Naive thymus-derived CD4-positive, alpha-beta T cell (primary cell): ENCODE measurements at regions of chr16 and their contacts with region 1.

Region 1: DNA sequence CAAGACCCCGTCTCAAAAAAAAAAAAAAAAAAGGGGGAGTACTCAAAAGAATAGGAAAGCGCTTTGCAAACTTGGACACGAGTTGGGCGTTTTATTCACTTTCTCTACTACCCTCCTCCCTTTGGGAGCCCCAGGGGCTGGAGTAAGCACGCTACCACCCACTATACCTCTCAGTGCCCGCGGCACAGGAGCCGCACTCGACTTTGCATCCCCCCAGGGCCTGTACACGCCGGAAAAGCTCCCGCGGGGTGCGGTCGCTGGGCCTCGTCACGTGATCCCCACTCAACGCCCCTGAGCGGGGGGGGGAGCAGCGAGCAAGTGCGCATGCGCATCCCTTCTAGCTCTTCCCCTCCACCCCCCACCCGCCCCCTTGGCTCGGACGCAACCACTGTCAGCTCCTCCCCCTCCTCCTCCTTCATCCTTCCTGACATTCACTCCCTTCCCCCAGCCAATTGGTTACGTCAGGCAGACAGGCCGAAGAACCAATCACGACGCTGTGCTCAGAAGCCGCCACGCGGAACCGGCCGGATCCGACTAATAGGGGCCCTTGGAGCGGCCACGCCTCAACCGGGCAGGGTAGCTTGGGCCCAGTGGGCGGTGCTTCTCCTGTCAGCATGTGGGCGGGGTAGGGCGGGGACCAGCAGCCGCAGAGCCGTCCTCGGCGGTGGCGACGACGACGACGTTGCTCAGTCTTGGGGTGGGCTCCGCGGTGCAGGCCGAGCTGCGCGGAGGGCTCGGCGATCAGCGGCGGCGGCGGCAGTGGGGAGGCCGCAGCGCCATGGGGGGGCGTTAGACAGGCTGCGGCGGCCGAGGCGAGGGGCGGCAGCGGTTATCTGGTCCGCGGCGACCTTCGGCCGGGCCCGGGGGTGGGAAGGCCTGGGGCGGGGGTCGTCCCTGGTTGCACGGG is at the start of gene HAPSTR1:
- DNase-seq: peak; percentile 89 to 100 (median 99)
- ATAC-seq: peak; percentile 93
- H3K4me3 ChIP-seq: peak within 1 kb of the TSS; percentile 90
- H3K4me3 Mint-ChIP-seq: peak within 1 kb of the TSS; percentile 90 to 100 (median 98)
- H3K27ac ChIP-seq: peak within 1 kb of the TSS; percentile 98
- H3K27ac Mint-ChIP-seq: peak within 1 kb of the TSS; percentile 92 to 99 (median 97)
- H3K4me1 ChIP-seq: peaks cover 21 to 32% of the 10 kb centered on the region in 2 donors
- H3K4me1 Mint-ChIP-seq: peaks cover 29 to 40% (median 39%) of the 10 kb centered on the region in 7 donors
- H3K27me3 ChIP-seq: no peaks in the 10 kb centered on the region
- H3K27me3 Mint-ChIP-seq: peaks cover 0 to 4% (median 0%) of the 10 kb centered on the region in 5 donors
- total RNA-seq, gene HAPSTR1: 69.6 to 136 (median 87.3) TPM

Region 2: GRCh38 chr16:8621572-8622314 is 469.5 kb before region 1 on chr16 and contains the start of gene METTL22:
- CTCF ChIA-PET with region 1: no interaction called
- POLR2A ChIA-PET with region 1: interaction called, 9 read pairs
- intact Hi-C with region 1: loop called (anchors 1 to 5 kb)
- DNase-seq: peak; percentile 83 to 98 (median 90)
- ATAC-seq: peak; percentile 99
- H3K4me3 ChIP-seq: peak within 1 kb of the TSS; percentile 97
- H3K4me3 Mint-ChIP-seq: peak within 1 kb of the TSS; percentile 93 to 100 (median 95)
- H3K27ac ChIP-seq: peak within 1 kb of the TSS; percentile 92
- H3K27ac Mint-ChIP-seq: peak within 1 kb of the TSS; percentile 75 to 93 (median 87)
- H3K4me1 ChIP-seq: peaks cover 7 to 10% of the 10 kb centered on the region in 2 donors
- H3K4me1 Mint-ChIP-seq: peaks cover 17 to 40% (median 26%) of the 10 kb centered on the region in 7 donors
- H3K27me3 ChIP-seq: no peaks in the 10 kb centered on the region
- H3K27me3 Mint-ChIP-seq: peaks cover 0 to 17% (median 6%) of the 10 kb centered on the region in 5 donors
- total RNA-seq, gene METTL22: 28.9 to 59.4 (median 48.9) TPM

Region 3: DNA sequence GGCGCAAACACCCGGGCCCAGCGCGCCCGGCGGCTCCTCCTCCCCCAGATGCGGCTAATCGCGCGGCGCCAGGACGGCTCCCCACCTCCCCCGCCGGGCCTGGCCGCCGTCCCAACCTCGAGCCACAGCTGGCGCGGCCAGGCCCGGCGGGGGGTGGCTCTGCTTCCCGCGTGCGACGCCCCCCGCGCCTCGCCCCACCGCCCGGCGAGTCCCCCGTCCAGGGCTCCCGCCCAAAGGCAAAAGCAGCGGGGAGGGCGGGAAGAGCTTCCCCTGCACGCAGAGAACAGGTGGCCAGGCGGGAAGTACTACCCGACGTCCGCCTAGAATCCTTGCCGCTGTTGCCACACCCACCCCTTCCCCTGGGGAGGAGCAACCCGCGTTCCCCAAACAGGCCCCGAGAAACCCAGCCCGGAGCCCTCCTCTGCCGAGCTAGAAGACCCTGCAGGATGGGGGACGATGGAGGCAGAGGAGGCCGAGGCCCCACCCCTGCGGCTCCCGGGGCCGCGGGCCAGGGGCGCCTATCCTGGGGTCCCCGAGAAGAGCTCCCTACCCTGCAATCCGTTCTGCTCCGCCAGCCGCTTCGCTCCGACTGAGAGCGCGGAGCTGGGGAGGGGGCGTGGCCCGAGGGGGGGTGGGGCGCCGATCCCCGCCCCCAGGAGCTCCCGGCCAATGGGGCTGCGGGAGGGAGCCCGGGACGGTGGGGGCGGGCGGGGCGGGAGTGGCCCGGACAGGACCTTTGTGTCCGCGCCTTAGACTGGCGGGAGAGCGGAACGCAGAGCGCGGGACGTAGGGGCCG is 222.6 kb before region 1 on chr16 and contains the start of gene CARHSP1:
- CTCF ChIA-PET with region 1: no interaction called
- POLR2A ChIA-PET with region 1: interaction called, 25 read pairs
- intact Hi-C with region 1: loop called (anchors 1 kb)
- DNase-seq: peak; percentile 65 to 87 (median 74)
- ATAC-seq: peak; percentile 91
- H3K4me3 ChIP-seq: peak within 1 kb of the TSS; percentile 74
- H3K4me3 Mint-ChIP-seq: peak within 1 kb of the TSS; percentile 93 to 98 (median 96)
- H3K27ac ChIP-seq: peak within 1 kb of the TSS; percentile 67
- H3K27ac Mint-ChIP-seq: peak within 1 kb of the TSS; percentile 88 to 98 (median 95)
- H3K4me1 ChIP-seq: peaks cover 6 to 12% of the 10 kb centered on the region in 2 donors
- H3K4me1 Mint-ChIP-seq: peaks cover 30 to 63% (median 51%) of the 10 kb centered on the region in 7 donors
- H3K27me3 ChIP-seq: no peaks in the 10 kb centered on the region
- H3K27me3 Mint-ChIP-seq: no peaks in the 10 kb centered on the region
- total RNA-seq, gene CARHSP1: 29.6 to 123 (median 39.9) TPM

Region 4: GRCh38 chr16:9072806-9073341 is 18.3 kb before region 1 on chr16:
- CTCF ChIA-PET with region 1: no interaction called
- POLR2A ChIA-PET with region 1: interaction called, 54 read pairs
- intact Hi-C with region 1: loop called in 1 of 2 experiments (anchors 2 kb)
- DNase-seq: no peak
- ATAC-seq: no peak
- H3K4me3 ChIP-seq: no peak overlapping the region
- H3K4me3 Mint-ChIP-seq: peak overlapping the region in 1 of 10 donors; percentile 55
- H3K27ac ChIP-seq: no peak overlapping the region
- H3K27ac Mint-ChIP-seq: peak overlapping the region in 1 of 9 donors; percentile 87
- H3K4me1 ChIP-seq: no peaks in the 10 kb centered on the region
- H3K4me1 Mint-ChIP-seq: peaks cover 4 to 28% (median 9%) of the 10 kb centered on the region in 7 donors
- H3K27me3 ChIP-seq: no peaks in the 10 kb centered on the region
- H3K27me3 Mint-ChIP-seq: peaks cover 0 to 6% (median 5%) of the 10 kb centered on the region in 5 donors

Region 5: DNA sequence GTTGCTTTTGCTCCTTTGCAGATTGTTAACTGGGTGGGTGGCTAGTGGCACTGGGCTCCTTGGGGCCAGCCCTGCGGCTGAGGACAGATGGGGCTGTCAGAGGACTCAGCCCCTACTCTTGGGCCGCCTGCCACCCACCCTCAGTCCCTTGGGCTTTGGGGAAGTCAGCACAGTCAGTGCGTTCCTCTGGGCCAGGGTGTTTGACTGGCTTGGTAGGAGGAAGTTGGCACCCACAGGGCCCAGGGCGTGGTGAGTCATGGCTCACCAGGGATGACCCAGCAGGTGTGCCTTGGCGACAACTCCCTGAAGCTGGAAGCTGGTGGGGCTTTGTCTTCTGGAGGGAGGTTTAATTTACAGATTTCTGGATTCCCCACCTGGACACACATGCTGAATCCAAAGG is 32.7 kb after region 1 on chr16:
- CTCF ChIA-PET with region 1: no interaction called
- POLR2A ChIA-PET with region 1: interaction called, 21 read pairs
- intact Hi-C with region 1: loop called in 1 of 2 experiments (anchors 5 kb)
- DNase-seq: no peak
- ATAC-seq: peak; percentile 61
- H3K4me3 ChIP-seq: no peak overlapping the region
- H3K4me3 Mint-ChIP-seq: no peak overlapping the region
- H3K27ac ChIP-seq: no peak overlapping the region
- H3K27ac Mint-ChIP-seq: peak overlapping the region in 5 of 9 donors; percentile 12 to 80 (median 51)
- H3K4me1 ChIP-seq: peaks cover 8 to 11% of the 10 kb centered on the region in 2 donors
- H3K4me1 Mint-ChIP-seq: peaks cover 32 to 67% (median 52%) of the 10 kb centered on the region in 7 donors
- H3K27me3 ChIP-seq: no peaks in the 10 kb centered on the region
- H3K27me3 Mint-ChIP-seq: no peaks in the 10 kb centered on the region